ENCODE measurements at regions of chr6 and their contacts with region 1.

Region 1: GRCh38 chr6:139124887-139125672 is 9.8 kb upstream of the HECA start:
- DNase-seq: peak; percentile 93
- ATAC-seq: peak; percentile 99
- H3K4me3 Mint-ChIP-seq: peak overlapping the region; percentile 67
- H3K27ac Mint-ChIP-seq: peak overlapping the region; percentile 93
- H3K4me1 Mint-ChIP-seq: peaks cover 41% of the 10 kb centered on the region
- H3K27me3 Mint-ChIP-seq: no peaks in the 10 kb centered on the region

Region 2: DNA sequence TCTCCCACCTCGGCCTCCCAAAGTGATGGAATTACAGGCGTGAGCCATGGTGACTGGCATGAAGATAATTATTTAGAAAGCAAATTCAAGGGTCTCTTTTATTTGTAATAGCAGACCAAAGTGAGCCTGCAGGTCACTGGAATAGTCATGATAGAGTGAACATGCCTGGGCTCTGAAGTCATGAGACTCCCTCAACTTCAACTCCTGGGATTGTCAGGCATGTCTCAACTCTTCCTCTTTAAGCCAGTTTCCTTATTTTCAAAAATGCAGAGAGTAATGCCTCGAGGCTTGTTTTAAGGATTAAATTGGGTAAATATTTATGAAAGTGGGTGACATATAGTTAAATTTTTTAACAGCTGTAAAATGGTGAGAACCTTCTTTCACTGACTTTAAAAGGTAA is 12.9 kb before region 1 on chr6:
- CTCF ChIA-PET with region 1: interaction called, 31 read pairs
- POLR2A ChIA-PET with region 1: interaction called, 8 read pairs
- DNase-seq: no peak
- ATAC-seq: no peak
- H3K4me3 Mint-ChIP-seq: no peak overlapping the region
- H3K27ac Mint-ChIP-seq: peak overlapping the region; percentile 13
- H3K4me1 Mint-ChIP-seq: peaks cover 58% of the 10 kb centered on the region
- H3K27me3 Mint-ChIP-seq: no peaks in the 10 kb centered on the region

Region 3: DNA sequence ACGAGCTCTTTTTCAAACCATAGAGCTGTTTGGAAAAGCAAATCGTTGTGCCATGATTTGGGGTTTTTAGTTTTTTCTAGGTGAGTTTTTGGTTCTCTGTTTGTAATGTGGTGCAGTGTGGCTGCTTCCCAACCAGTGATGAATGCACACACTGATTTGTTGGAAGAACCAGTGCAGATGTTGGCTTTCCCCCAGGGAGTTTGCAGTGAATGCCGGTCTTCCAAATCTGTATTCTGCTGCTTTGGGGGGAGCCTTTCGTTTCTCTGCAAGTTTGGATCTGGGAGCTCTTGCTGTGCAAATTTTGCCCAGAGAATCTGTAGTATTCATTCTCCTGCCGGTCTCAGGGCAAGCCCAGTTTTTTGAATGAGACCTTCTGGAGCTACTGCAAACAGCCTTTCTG is 24.3 kb after region 1 on chr6:
- CTCF ChIA-PET with region 1: interaction called, 29 read pairs
- POLR2A ChIA-PET with region 1: interaction called, 4 read pairs
- DNase-seq: no peak
- ATAC-seq: no peak
- H3K4me3 Mint-ChIP-seq: no peak overlapping the region
- H3K27ac Mint-ChIP-seq: peak overlapping the region; percentile 63
- H3K4me1 Mint-ChIP-seq: peaks cover 89% of the 10 kb centered on the region
- H3K27me3 Mint-ChIP-seq: no peaks in the 10 kb centered on the region

Region 4: GRCh38 chr6:139173172-139173571 is 48.1 kb after region 1 on chr6:
- CTCF ChIA-PET with region 1: interaction called, 29 read pairs
- POLR2A ChIA-PET with region 1: interaction called, 4 read pairs
- DNase-seq: peak; percentile 48
- ATAC-seq: peak; percentile 74
- H3K4me3 Mint-ChIP-seq: no peak overlapping the region
- H3K27ac Mint-ChIP-seq: peak overlapping the region; percentile 75
- H3K4me1 Mint-ChIP-seq: peaks cover 85% of the 10 kb centered on the region
- H3K27me3 Mint-ChIP-seq: no peaks in the 10 kb centered on the region

Region 5: DNA sequence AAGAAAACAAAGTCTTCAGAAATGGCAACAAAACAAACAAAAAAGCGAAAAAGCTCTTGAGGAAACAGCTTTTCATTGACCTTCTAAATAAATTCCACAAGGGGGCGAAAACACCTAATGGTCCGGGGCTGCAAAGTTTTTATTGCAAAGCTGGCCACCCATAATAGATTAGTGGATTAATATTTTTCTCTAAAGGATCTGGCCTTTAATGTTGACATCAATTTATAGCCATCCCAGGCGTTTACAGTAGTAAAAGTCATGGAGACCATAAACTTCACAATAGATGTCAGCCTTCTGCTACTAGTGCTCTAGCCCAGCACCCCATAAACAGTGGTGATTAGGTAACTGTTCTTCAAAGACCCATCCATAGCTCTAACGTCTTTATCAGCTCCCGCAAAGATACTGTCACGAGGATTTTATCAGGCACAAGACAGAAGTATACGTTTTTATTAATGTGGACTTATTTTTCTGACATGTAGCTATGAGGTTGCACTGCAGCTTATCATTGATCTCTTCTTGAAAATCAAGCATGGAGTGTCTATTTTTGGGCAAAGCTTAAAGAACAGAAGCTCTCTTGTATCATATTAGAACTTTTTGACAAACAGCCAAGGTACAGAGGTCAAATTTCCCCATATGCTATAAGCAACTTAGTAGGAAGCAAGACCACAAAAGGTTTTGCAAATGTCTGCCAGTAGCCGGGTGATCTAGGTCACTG is 244.6 kb after region 1 on chr6:
- CTCF ChIA-PET with region 1: interaction called, 48 read pairs
- POLR2A ChIA-PET with region 1: interaction called, 17 read pairs
- DNase-seq: no peak
- ATAC-seq: no peak
- H3K4me3 Mint-ChIP-seq: no peak overlapping the region
- H3K27ac Mint-ChIP-seq: no peak overlapping the region
- H3K4me1 Mint-ChIP-seq: peaks cover 43% of the 10 kb centered on the region
- H3K27me3 Mint-ChIP-seq: no peaks in the 10 kb centered on the region

Region 6: GRCh38 chr6:139375232-139376016 is 250.3 kb after region 1 on chr6:
- CTCF ChIA-PET with region 1: interaction called, 24 read pairs
- POLR2A ChIA-PET with region 1: interaction called, 17 read pairs
- DNase-seq: peak; percentile 88
- ATAC-seq: peak; percentile 54
- H3K4me3 Mint-ChIP-seq: peak overlapping the region; percentile 99
- H3K27ac Mint-ChIP-seq: peak overlapping the region; percentile 100
- H3K4me1 Mint-ChIP-seq: peaks cover 34% of the 10 kb centered on the region
- H3K27me3 Mint-ChIP-seq: no peaks in the 10 kb centered on the region